Gastrocnemius medialis (tissue), 4 donors: ENCODE measurements at regions of chr2 and their contacts with region 1.

Region 1: GRCh38 chr2:223051693-223052289 is at the start of gene KCNE4:
- DNase-seq: no peak
- ATAC-seq: peak in 1 of 2 donors; percentile 34
- H3K4me3 ChIP-seq: peak within 1 kb of the TSS; percentile 39 to 63 (median 50)
- H3K27ac ChIP-seq: peak within 1 kb of the TSS; percentile 76 to 81 (median 77)
- H3K4me1 ChIP-seq: peaks cover 5 to 6% of the 10 kb centered on the region in 2 donors
- H3K27me3 ChIP-seq: peaks cover 12 to 27% (median 26%) of the 10 kb centered on the region in 3 donors
- CTCF ChIP-seq: no peak
- POLR2A ChIP-seq: peak; percentile 41 to 63
- total RNA-seq, gene KCNE4: 2.0 to 6.1 (median 3.3) TPM

Region 2: DNA sequence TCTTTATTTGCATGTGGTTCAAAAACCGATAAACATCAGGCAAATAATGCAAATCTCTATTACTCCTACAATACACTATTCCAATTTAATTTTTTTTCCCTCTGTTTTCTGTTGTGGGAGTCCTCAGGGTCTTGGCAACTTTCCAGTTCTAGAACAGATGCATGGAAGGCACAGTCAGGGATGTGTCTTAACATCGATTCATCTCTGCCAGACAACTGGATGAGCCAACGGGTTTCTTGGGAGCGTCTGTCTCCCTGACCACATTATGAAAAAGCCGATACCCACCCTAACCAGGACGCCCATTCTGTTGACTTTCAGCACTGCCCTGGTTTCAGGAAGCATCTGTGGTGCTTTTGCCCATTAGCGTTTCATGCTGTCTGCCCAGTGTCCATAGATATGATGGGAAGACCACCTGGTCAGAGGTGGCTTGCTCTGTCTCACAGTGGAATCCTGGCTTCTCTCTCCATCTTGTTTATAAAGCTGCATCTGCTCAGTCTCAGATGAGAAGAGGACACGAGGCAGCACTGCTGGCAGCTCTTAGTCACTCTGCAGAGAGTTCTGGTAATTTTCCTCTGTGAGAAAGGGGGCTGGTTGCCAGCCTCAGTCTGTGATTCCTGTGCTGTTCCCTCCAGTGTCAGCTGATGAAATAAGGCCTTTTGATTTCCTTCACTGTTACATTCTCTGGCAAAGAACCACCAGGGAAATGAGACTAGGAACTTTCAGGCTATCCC is 57.7 kb before region 1 on chr2:
- in situ Hi-C with region 1: no loop called
- intact Hi-C with region 1: loop called (anchors 5 kb)
- DNase-seq: peak; percentile 89 to 90
- ATAC-seq: peak; percentile 99
- H3K4me3 ChIP-seq: peak overlapping the region in 2 of 4 donors; percentile 38 to 47
- H3K27ac ChIP-seq: peak overlapping the region; percentile 73 to 89 (median 80)
- H3K4me1 ChIP-seq: peaks cover 5 to 18% of the 10 kb centered on the region in 2 donors
- H3K27me3 ChIP-seq: no peaks in the 10 kb centered on the region
- CTCF ChIP-seq: no peak
- POLR2A ChIP-seq: no peak

Region 3: DNA sequence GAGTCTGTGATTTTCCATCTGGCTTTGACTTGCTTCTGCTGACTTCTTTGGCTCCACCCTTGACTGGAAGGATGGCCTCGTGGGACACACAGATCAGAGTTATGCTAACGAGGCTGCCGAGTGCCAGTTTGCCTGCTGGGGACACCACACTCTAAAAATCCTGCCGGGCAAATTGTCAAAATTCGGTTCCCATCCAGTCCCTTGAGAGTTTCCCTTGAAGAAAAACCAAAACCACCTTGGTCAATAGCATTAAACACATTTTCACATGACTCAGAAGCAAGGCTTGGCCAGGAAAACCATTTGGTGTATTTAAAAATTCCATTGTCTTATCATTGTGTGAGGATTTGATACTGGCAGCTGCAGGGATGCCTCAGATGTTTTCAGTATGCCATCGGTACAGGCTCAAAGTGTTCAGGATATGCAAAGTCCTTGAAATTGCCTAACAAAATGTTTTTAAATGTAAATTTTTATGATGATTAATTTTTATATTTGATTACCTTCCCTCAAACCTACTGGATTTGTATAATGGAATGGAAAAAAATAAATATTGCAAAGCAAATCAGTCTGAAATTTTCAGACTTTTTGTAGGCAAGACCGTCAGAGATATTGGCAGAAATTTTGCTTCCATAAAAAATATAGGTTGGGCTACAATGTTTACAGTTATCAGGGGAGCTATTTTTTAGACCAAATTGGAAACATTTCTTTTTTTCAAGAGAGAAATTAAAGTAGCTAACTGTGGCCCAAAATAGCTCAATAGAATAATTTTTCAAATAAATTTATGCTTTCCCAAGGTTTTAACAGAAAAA is 41.8 kb after region 1 on chr2:
- in situ Hi-C with region 1: no loop called
- intact Hi-C with region 1: loop called (anchors 5 kb)
- DNase-seq: peak in 1 of 2 donors; percentile 45
- ATAC-seq: peak in 1 of 2 donors; percentile 53
- H3K4me3 ChIP-seq: no peak overlapping the region
- H3K27ac ChIP-seq: peak overlapping the region; percentile 24 to 58 (median 34)
- H3K4me1 ChIP-seq: peaks cover 3% of the 10 kb centered on the region in 2 donors
- H3K27me3 ChIP-seq: no peaks in the 10 kb centered on the region
- CTCF ChIP-seq: no peak
- POLR2A ChIP-seq: no peak